Cardiac septum (tissue), 1 donor: ENCODE measurements at regions of chr9 and their contacts with region 1.

Region 1: GRCh38 chr9:104991144-104991953 is 63.4 kb upstream of the ABCA1 start:
- DNase-seq: peak; percentile 96

Region 2: GRCh38 chr9:104868687-104869404 is 122.5 kb before region 1 on chr9:
- intact Hi-C with region 1: loop called (anchors 5 kb)
- DNase-seq: no peak

Region 3: DNA sequence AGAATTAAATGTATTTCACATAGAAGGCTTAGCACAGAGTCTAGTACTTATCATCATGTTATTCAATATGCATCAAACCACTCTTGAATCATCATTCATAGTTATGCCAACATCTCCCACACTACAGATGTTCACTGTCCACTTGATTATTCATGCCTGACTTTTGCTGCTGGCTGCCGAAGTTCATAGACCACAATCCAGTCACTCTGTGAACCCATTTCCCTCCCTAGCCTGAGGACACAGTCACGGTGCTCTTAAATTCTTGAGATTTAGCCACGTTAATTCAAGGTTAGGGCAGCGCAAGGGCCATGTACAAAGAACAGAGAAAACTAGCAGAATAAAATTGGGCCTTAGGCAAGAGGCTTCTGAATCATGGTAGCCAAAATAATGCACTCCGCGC is 95.8 kb before region 1 on chr9:
- intact Hi-C with region 1: no loop called
- DNase-seq: no peak

Region 4: DNA sequence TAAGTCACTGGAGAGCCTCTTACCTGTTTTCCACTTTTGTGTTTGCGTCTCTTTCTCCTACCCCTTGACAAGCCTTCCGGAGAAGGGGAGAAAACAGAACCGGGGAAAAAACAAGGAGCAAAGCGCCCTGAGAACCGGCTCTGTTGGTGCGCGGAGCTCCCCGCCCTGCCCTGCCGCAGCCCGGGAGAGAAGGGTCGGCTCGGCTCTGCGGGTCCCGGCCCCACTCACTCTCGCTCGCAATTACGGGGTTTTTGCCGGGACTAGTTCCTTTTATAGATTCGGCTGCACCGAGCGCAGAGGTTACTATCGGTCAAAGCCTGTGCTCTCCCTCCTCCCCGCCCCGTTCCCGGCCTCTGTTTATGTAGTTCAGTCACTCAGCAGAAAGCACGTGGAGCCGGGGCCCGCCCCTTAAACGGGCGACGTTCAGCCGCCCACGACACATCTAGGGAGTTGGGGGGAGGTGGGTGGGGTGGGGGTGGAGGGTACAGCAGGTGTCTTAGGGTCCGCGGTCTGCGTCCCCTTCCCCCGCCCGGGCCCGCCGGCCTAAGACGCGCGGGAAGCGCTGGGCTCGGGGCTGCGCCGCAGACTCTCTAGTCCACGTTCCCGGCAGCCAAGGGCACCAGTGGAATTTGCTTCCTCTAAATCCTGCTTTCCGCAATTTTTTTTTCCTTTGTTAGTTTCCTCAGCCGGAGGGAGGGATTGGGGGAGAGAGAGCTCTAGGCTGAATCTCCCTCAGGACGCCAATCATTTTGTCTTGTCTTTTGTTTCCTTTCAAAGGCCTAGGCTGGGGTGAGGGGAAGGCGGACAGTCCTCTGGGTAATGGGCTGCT is 63.2 kb before region 1 on chr9 and contains the start of gene ABCA1:
- intact Hi-C with region 1: loop called (anchors 1 kb)
- DNase-seq: peak; percentile 94
- total RNA-seq, gene ABCA1: 5.4 TPM

Region 5: DNA sequence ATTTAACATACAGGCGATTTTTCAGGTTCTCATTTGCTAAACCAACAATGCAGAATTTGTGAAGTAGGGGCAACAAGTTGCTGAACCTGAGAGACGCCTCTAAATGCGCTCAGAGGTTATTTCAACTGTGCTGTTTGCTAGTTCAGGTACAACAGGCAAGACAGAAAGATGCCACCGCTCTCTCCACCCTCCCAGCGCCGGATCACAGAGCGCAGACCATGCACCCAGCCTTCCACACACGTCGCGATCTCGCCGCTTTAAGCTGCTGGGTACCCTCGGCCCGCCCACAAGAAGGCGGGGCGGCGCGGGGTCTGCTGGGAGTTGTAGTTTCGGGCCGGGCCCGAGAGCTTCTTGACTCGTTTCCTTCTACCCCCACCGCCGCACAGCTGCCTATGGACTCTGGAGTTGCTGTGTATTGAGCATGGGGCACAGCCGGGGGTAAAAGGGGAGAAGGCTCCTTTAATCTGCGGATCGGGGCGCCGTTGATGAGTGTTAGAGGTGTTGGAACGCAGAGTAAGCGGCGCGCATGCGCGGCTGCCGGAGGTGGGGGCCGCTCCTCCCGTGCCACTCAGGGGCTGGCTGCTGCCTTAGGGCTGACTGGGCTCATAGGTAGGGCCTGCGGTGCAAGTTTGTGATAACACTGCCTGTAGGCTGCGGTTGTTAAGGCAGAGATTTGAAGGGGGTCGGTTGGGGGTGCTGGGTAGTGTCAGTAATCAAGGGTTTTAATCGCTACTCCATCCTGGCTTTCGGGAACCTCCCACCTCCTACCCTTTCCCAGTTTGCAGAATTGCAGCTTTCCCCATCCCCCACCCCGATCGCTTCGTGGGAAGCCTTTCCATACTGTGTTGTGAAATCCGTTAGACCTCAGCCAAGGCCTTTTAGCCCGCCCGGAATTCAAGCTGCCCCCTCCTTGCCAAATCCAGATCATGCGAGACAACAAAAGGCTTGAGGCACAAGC is 23.0 kb before region 1 on chr9:
- intact Hi-C with region 1: loop called (anchors 2 kb)
- DNase-seq: peak; percentile 95

Region 6: DNA sequence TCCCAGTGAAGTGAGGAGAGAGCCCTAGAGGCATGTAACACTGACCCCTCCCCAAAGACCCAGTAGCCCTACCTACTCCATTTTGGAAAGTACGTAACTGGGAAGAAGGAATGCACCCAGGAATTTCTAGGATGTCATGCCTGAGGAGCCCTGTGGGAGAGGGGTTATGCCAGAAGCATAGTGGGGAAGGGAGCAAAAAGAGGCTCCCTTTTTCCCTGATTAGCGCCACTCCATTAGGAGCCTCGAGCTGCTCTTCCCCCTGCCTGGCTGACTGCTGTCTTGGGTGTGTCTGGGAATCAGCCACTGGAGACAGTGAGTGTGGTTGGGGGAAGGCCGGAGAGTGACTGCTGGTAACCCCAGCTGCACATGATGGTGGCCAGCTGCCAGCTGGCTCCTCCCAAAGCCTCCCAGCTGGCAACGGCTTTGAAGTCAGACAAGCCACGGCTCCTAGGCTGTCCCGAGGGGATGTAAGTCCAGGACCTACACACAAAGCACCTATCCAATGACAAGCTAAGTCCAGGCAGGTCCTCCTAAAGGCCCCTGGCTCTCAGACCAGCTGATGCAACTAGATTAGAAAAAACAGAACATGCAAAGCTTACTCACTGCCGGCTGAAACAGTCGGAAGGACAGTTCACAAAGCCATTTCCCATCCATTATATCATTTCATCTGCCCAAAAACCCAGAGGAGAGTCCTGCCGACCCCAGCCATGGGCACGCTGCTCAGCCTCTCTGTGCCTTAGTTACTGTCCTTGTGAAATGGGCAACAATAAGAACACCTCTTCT is 73.2 kb after region 1 on chr9:
- intact Hi-C with region 1: loop called (anchors 2 kb)
- DNase-seq: peak; percentile 93

Region 7: DNA sequence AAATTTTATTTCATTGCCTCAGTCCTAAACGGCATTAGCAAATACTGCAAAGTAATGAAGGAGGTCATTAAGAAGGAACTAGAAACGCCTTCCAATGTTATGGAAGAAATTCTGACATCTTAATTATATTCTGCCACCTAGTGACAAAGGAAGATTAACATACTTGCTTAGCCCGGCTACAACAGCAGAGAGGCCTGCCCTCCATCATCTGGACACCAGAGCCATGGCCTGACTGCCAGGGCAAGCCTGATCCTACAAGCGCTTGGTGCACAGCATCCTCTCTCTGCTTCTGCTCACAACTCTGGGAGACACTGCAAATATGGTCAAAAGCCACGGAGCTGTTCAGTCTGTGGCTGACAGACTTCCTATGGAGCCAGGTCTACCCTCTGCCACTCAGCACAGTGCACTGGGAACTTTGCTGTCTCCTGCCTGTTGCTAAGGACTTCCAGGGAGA is 165.8 kb after region 1 on chr9:
- intact Hi-C with region 1: loop called (anchors 5 kb)
- DNase-seq: peak; percentile 76

Region 8: DNA sequence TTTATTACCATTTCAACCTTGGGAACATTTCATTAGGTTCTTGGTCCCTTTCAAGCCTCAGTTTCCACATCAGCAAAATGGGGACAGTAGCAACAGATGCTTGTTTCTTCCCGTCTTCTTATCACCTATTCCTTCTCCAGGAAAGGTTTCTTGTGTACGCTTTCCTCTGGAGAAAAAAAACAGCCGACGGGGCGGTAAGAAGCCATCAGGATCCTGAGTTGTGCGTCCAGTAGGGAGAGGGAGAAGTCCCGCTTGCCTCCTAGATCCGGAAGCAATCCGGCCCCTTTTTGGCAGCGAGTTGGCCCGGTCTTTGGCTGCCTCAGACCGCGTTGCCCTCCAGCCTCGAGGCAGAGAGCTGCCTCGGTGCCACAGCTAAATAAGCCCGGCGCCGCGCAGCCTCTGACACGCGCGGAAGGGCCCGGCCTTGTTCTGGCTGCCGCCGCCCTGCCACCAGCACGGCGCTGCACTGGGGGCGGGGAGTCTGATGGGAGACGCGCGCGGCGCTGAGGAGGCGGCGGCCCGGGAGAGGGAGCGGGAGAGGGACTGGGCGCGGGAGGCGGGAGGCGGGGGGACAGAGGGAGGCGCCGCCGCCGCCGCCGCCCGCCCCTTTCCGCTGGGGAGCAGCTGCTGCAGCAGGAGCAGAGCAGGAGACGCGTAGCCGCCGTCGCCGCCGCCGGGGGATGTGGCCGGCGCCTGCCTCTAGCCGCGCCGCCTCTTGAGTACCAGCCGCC is 252.8 kb after region 1 on chr9 and contains the start of gene SLC44A1:
- intact Hi-C with region 1: loop called (anchors 2 kb)
- DNase-seq: peak; percentile 99
- total RNA-seq, gene SLC44A1: 22.6 TPM